A673 (cell line): ENCODE measurements at regions of chr4 and their contacts with region 1.

Region 1: GRCh38 chr4:23889814-23890341 is at the start of gene PPARGC1A:
- DNase-seq: peak; percentile 7
- H3K4me3 ChIP-seq: peak within 1 kb of the TSS; percentile 0
- H3K27ac ChIP-seq: no peak within 1 kb of the TSS
- H3K4me1 ChIP-seq: no peaks in the 10 kb centered on the region
- H3K27me3 ChIP-seq: peaks cover 28% of the 10 kb centered on the region
- CTCF ChIP-seq: no peak
- total RNA-seq, gene PPARGC1A: not detected in 2 replicates

Region 2: DNA sequence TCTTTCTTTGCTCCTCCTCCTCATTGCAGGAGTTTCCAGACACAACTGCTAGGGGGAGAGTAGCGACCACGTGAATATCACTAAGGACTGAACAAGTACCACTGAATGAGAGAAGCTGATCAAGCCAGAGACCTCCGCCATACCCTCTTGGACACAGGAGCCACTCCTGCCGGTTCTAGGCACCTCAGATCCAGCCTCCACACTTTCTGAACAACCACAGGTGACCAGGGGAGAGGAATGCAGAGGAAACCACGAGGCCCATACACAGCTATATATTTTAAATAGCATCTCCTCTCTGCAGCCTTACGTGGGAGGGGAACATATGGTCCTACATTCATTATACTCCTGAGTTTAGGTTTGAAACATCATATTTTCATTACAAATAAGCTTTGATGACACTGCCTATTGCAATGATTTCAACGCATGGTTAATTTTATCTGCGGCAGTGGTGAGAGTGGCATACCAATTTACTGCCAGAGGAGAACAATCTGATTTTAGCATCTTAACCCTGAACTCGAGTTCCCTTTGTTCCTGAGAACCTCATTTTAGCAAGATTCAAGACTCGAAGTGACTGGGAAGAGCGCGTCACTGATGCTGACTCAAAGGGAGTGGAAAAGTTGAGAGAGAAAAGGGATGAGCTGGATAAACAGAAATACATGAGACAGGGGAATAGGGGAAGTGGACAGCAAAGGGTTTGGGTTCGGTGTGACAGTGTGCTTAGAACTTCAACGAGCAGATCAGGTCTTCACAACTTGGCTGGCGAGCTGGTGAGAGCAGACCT is 231.7 kb after region 1 on chr4:
- CTCF ChIA-PET with region 1: interaction called, 14 read pairs
- POLR2A ChIA-PET with region 1: no interaction called
- intact Hi-C with region 1: no loop called
- DNase-seq: no peak
- H3K4me3 ChIP-seq: no peak overlapping the region
- H3K27ac ChIP-seq: no peak overlapping the region
- H3K4me1 ChIP-seq: no peaks in the 10 kb centered on the region
- H3K27me3 ChIP-seq: peaks cover 11% of the 10 kb centered on the region
- CTCF ChIP-seq: no peak